Vagina (tissue), 2 donors: ENCODE measurements at regions of chr12 and their contacts with region 1.

Region 1: GRCh38 chr12:132828706-132829534 is at the start of gene GOLGA3:
- DNase-seq: no peak
- H3K4me3 ChIP-seq: peak within 1 kb of the TSS; percentile 87 to 90
- H3K27ac ChIP-seq: peak within 1 kb of the TSS; percentile 97
- H3K4me1 ChIP-seq: peaks cover 43% of the 10 kb centered on the region
- H3K27me3 ChIP-seq: no peaks in the 10 kb centered on the region
- CTCF ChIP-seq: no peak
- POLR2A ChIP-seq: peak in 1 of 2 donors; percentile 52
- total RNA-seq, gene GOLGA3: 49.8 TPM

Region 2: DNA sequence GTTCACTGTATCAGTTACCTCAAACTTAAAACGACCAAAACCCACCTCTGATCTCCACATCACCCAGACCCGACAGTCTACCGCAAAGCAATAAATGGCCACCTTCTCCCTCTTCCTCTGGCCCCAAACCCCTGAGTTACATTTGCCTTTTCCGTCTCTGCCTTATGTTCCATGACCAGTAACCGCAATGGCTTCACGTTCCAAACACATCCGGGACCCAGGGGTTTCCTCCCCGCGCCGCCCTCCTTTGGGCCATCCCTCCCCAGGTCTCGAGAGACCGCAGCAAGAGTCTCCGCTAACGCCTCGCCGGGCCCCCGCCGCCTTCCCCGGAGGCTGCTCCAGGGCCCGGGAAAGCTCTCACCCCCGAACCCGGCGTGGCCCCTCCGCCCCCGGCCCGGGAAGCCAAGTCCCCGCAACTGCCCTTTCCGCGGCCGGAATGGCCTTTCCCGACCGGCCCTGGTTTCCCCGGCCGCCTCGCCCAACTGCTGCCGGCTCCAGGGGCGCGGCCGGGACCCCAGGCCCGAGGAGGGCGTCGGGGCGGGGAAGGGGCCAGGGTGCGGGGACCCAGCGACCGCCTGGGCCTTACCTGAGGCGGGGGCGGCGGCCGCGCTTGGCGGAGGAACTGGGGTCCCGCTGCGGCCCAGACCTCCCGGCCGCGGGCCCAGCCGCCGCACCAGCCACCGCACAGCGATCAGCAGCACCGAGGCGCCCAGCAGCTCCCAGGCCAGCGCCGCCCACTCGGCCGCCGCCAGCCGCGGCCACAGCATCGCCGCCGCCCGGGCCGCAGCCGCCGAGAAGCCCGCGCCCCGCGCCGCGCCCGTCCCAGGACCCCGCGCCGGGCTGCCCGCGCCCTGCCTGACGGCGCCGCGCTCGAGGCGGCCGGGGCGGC is 67.6 kb before region 1 on chr12 and contains the start of gene ANKLE2:
- intact Hi-C with region 1: loop called (anchors 2 kb)
- DNase-seq: no peak
- H3K4me3 ChIP-seq: peak within 1 kb of the TSS; percentile 98
- H3K27ac ChIP-seq: peak within 1 kb of the TSS; percentile 94
- H3K4me1 ChIP-seq: peaks cover 31% of the 10 kb centered on the region
- H3K27me3 ChIP-seq: no peaks in the 10 kb centered on the region
- CTCF ChIP-seq: no peak
- POLR2A ChIP-seq: peak in 1 of 2 donors; percentile 12
- total RNA-seq, gene ANKLE2: 63.1 TPM

Region 3: DNA sequence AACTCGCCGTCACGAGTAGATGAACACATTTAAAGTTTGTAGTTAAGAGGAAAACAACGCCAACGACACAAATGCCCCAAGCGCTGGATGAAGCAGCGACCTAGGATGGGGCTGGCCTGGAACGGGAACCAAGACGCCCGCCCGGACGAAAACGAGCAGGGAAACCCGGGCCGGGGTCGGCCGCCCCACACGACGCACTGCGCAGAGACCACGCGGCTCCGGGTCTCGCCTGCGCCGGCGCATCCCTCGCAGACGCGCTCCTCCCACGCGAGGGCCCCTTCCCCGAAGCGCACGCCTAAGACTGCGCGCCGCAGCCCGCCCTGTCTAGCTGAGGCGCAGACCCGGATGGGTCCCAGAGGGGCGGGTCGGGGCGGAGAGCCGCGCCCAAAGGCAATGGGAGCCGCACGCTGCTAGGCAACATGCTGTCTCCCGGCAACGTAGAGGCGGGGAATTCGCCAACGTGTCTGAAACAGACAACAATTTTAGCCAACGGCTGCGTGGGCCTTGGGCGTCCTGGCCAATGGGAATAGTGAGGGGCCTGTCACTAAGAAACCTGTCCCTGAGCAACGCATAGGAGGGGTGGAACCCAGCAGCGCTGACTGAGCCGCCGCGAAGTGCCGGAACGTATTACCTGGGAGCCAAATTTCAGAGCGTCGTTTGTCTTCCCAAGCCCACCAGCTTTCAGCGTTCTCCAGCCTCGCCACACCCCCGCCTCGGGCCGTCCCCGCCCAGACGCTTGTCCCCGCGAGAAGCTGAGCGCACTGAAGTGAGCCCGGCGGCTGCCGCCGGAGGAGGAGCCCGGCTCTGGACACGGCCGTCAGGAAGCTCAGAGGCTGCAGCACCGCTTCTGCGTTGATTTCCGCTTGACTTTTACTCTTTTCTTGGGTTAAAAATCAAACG is 79.5 kb after region 1 on chr12:
- intact Hi-C with region 1: loop called (anchors 5 kb)
- DNase-seq: peak in 1 of 2 donors; percentile 99
- H3K4me3 ChIP-seq: peak overlapping the region; percentile 63 to 78
- H3K27ac ChIP-seq: peak overlapping the region; percentile 68
- H3K4me1 ChIP-seq: peaks cover 20% of the 10 kb centered on the region
- H3K27me3 ChIP-seq: no peaks in the 10 kb centered on the region
- CTCF ChIP-seq: no peak
- POLR2A ChIP-seq: peak in 1 of 2 donors; percentile 66